ENCODE measurements at regions of chr10 and their contacts with region 1.

Region 1: GRCh38 chr10:24901686-24902399 is 50.6 kb downstream of the PRTFDC1 start:
- DNase-seq: peak; percentile 88
- H3K4me3 ChIP-seq: no peak overlapping the region
- CTCF ChIP-seq: no peak

Region 2: DNA sequence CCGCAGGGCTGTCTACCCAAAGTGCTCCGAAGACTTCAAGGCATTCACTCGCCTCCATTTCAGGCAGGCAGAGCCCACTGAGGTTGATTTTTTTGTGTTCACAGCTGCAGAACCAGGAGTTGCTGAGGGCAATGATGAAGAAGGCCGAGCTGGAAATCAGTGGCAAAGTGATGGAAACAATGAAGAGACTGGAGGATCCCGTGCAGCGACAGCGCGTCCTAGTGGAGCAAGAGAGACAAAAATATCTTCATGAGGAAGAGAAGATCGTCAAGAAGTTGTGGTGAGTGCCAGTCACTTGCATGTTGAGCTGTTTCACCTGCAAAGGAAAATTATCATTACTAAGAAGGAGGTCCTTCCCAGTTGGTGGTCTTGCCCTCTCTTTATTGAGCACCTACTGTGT is 388.7 kb before region 1 on chr10:
- in situ Hi-C with region 1: no loop called
- DNase-seq: peak; percentile 26
- H3K4me3 ChIP-seq: no peak overlapping the region
- CTCF ChIP-seq: peak; percentile 57

Region 3: DNA sequence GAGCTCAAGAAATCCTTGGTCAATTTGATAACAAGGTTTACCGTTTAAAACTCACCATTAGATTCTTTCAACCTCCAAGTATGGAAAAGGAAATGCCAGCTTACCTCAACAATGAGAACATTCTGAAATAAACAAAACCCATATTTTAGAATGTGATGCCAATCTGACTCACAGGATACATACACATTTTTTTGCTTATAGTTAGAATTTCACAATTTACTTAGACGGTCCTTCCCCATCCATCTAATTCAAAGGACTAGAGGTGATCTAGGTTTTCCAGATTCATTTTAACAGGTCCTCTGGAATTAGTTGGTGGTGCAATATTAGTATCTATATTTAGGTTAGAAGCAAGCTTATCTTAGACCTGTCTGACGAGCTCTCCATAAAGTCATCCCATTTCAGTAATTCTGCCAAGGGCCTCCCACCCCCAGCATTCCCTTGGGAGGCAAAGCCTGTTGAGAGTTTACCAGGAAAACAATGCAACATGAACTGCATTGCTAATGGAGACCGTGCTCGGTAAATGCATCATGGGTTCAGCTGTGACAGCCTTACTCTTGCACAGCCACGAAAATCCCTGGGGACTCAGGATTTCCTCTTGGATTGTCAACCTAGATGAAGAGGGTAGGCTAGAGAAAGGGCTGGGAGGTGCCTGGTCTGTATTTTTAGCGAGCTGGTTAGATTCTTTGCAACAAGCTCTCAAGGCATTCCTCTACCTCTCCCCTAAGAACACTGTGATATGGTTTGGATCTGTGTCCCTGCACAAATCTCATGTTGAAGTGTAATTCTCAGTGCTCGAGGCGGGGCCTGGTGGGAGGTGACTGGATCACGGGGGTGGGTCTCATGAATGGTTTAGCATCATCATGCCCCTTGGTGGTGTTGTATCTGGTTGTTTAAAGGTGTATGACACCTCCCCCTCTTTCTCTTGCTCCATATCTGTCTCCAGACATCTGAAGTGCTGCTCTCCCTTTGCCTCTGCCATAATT is 43.3 kb before region 1 on chr10:
- in situ Hi-C with region 1: loop called (anchors 5 kb)
- DNase-seq: no peak
- H3K4me3 ChIP-seq: no peak overlapping the region
- CTCF ChIP-seq: no peak

Region 4: DNA sequence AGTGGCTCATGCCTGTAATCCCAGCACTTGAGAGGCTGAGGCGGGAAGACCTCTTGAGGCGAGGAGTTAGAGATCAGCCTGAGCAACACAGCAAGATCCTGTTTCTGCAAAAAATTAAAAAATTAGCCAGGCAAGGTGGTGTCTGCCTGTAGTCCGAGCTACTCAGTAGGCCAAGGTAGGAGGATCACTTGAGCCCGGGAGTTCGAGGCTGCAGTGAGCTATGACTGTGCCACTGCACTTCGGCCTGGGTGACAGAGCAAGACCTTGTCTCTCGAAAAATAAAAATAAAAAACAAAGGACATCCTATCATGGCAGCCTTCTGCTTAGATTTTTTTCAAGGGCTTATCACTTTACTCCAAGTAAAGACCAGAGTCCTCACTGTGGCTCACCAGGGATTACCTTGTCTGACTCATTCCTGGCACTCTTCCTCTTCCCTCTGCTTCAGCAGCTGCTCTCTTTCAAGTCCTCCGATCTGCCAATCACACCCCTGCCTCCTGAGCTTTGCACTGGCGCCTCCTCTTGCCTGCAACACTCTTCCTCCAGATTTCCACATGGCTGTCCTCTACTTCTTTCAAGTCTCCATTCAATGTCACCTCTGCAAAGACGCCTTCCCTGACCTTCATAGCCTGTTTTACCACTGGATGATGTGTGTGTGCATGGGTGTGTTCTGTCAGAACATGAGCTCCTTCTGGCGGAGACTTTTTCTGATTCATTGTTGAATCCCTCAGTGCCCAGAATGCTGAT is 42.8 kb after region 1 on chr10:
- in situ Hi-C with region 1: no loop called
- DNase-seq: no peak
- H3K4me3 ChIP-seq: no peak overlapping the region
- CTCF ChIP-seq: no peak

Region 5: DNA sequence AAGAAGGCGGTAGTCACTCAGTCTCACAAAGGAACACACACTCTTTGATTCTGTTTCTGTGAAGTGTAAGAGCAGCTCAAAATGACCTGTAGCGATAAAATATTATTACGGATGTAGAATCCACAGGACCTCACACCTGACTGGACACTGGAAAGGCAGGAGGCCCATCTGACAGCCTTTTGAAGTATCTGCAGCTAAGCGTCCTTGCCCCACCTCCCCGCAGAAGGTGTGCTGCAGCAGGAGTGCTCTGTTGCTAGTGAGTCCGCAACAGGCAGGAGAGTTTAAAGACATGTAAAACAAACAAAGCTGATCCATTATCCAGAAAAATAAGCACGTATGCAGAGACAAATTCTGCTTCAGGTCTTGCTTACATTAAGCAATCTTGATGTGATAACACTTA is 628.5 kb after region 1 on chr10:
- in situ Hi-C with region 1: no loop called
- DNase-seq: no peak
- H3K4me3 ChIP-seq: no peak overlapping the region
- CTCF ChIP-seq: no peak

Measured in astrocyte of the cerebellum (primary cell).